ENCODE measurements at regions of chr1 and their contacts with region 1.

Region 1: DNA sequence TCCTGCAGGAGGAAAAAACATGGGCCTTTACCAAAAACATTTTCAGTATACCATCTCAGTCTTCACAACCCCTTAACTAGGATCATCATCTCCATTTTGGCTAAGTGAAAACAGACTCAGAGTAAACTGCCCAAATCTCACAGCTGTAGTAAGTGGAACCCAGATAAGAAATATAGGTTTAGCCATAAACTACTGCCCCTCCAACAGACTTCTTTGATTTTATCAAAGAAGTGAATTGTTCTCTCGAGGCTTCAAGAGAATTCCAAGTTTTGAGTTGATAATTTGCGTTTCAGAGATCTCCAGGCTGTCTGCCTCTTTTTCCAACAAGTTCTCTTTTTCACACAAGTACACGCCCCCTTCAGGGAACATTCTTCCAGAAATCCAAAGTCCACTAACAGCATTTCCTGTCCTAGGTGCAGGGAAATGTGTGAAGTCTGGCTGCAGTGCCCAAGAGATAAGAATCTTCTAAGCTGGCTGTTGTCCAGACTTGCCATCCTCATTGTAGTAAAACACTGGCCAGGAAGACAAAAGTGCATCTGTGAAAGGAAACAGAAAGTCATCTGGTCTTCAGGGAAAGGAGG is 30.8 kb downstream of the RNF19B start:
- DNase-seq: no peak
- ATAC-seq: peak; percentile 13

Region 2: GRCh38 chr1:32848354-32849063 is 85.3 kb before region 1 on chr1:
- intact Hi-C with region 1: no loop called
- DNase-seq: no peak
- ATAC-seq: no peak

Region 3: DNA sequence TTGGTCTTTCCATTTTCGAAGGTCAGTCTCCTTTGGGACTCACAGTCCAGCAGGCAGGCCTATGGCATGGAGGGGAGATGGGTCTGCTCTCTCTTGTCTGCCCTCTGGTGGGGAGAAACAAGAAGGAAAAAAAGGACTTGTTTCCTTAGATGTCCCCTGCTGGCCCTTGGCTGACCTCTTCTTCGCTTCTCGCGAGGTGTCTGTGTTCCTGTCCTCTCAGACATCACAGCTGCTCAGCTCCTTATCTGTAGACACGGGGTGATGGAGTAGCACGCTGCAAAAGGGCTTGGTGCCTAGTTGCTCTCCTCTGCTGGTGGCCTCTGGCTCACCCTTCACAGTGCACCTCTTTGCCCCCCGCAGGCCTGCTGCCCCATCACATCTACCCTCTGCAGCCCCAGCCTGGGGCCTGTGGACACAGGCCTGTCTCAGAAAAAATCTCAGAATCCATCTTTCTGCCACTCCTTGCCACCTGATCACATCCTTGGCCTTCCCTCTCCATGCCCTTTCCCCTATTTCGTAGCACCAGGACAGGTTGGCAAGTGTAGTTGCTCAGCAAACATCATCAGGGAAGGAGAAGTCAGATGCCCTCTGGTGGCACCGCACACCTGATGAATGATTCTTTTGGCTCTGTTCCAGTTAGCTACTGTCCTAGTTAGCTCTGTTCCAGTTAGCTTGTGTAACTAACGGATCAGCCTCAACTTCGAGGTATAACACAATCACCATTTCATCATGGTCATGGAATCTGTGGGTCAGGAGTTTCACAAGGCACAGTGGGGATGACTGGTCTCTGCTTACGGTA is 121.6 kb after region 1 on chr1:
- intact Hi-C with region 1: loop called (anchors 1 kb)
- DNase-seq: peak; percentile 86
- ATAC-seq: peak; percentile 97

Region 4: GRCh38 chr1:33137800-33138199 is 204.0 kb after region 1 on chr1:
- intact Hi-C with region 1: no loop called
- DNase-seq: no peak
- ATAC-seq: peak; percentile 45

Measured in Right ventricle myocardium inferior (tissue), 1 donor.